Caco-2 (cell line): ENCODE measurements at regions of chr12 and their contacts with region 1.

Region 1: DNA sequence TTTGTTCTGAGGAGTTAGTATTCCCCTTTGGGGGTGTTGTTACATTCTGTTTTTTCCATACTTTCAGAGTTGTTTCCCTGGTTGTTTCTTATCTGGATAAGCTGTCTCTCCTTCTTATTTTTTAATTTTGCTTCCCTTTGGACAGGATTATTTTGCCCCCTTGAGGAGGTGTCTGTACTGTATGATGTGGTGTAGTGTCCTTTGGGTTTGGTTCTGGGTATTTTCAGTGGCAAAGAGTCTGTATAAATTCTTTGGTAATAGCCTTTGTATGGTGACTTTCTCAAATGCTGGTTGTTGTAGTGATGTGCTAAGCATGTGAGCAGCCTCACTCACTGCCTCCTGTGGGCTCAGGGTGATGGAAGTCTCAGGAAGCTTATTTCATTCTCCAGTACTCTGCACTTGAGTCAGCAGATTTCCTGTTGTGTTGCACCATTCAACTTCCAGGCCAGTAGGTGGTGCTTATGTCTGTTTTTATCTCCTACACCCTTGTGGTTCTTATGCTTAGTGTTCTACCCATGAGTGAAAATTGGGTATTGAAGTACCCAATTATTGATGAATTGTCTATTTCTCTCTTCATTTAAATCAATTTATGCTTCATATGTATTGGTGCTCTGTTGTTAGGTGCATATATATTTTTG is 103.3 kb upstream of the PMCH start:
- DNase-seq: peak; percentile 37 to 41
- H3K4me3 ChIP-seq: no peak overlapping the region
- H3K4me3 Mint-ChIP-seq: no peak overlapping the region
- H3K27ac Mint-ChIP-seq: no peak overlapping the region
- H3K4me1 ChIP-seq: no peaks in the 10 kb centered on the region
- H3K4me1 Mint-ChIP-seq: no peaks in the 10 kb centered on the region
- H3K27me3 ChIP-seq: no peaks in the 10 kb centered on the region
- H3K27me3 Mint-ChIP-seq: peaks cover 3% of the 10 kb centered on the region
- CTCF ChIP-seq: peak; percentile 22 to 48

Region 2: DNA sequence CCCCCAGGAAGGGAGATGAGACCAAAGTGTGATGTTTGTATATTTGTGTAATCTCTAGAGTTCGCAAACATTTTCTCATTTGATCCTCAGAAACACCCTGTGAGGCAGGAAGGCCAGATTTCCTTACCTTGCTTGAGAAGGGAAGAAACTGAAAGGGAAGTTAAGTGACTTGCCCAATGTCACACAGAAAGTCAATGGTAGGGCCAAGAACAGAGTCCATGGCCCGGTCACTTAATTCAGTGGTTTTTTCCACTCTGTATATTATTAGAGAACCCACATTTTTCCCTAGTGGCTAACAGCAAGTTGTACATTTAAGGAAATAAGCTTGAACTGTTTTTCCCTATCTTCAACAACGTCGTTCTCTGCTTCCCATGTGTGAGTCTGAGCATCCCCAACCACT is 629.1 kb before region 1 on chr12:
- CTCF ChIA-PET with region 1: no interaction called
- POLR2A ChIA-PET with region 1: no interaction called
- intact Hi-C with region 1: no loop called
- DNase-seq: no peak
- H3K4me3 ChIP-seq: no peak overlapping the region
- H3K4me3 Mint-ChIP-seq: no peak overlapping the region
- H3K27ac Mint-ChIP-seq: no peak overlapping the region
- H3K4me1 ChIP-seq: peaks cover 7% of the 10 kb centered on the region; the same call in 1 of the 2 replicates
- H3K4me1 Mint-ChIP-seq: peaks cover 15% of the 10 kb centered on the region
- H3K27me3 ChIP-seq: no peaks in the 10 kb centered on the region
- H3K27me3 Mint-ChIP-seq: no peaks in the 10 kb centered on the region
- CTCF ChIP-seq: no peak

Region 3: GRCh38 chr12:102119674-102120563 is 181.0 kb before region 1 on chr12 and contains the starts of genes NUP37 and PARPBP:
- CTCF ChIA-PET with region 1: no interaction called
- POLR2A ChIA-PET with region 1: interaction called, 5 read pairs
- intact Hi-C with region 1: loop called (anchors 10 kb)
- DNase-seq: peak; percentile 94 to 95
- H3K4me3 ChIP-seq: peak within 1 kb of the TSS; percentile 55
- H3K4me3 Mint-ChIP-seq: peak within 1 kb of the TSS; percentile 90
- H3K27ac Mint-ChIP-seq: peak within 1 kb of the TSS; percentile 49
- H3K4me1 ChIP-seq: peaks cover 3% of the 10 kb centered on the region; the same call in 1 of the 2 replicates
- H3K4me1 Mint-ChIP-seq: no peaks in the 10 kb centered on the region
- H3K27me3 ChIP-seq: no peaks in the 10 kb centered on the region
- H3K27me3 Mint-ChIP-seq: no peaks in the 10 kb centered on the region
- CTCF ChIP-seq: no peak
- total RNA-seq, gene NUP37: 78.9 and 87.4 TPM in 2 replicates
- total RNA-seq, gene PARPBP: 28.2 and 30.4 TPM in 2 replicates

Region 4: DNA sequence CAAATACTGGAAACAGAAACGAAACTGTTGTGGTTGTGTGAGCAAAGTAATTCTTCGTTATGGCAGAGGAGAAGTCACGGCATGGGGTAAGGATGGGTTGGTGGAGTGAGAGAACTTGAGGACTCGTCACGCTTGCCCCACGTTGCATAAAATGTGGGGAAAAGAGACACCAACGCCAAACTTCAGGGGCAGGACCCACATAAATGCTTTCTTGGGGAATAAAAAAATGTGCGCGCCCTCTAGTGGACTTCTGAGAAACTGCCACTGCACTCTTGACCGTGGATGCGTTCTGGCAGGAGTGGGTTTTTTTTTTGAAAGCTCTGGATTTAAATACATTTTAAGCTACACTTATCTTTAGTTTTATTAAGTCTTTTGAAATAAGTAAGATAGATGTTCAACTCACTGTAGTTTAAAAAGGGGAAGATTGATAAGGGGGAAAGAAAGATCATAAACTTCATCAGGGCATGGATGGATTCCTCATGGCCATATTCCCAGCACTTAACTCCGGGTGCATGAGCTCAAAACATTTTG is 183.6 kb after region 1 on chr12:
- CTCF ChIA-PET with region 1: interaction called, 5 read pairs
- POLR2A ChIA-PET with region 1: no interaction called
- intact Hi-C with region 1: loop called (anchors 1 kb)
- DNase-seq: peak; percentile 34 to 42
- H3K4me3 ChIP-seq: no peak overlapping the region
- H3K4me3 Mint-ChIP-seq: no peak overlapping the region
- H3K27ac Mint-ChIP-seq: peak overlapping the region; percentile 33
- H3K4me1 ChIP-seq: no peaks in the 10 kb centered on the region
- H3K4me1 Mint-ChIP-seq: no peaks in the 10 kb centered on the region
- H3K27me3 ChIP-seq: no peaks in the 10 kb centered on the region
- H3K27me3 Mint-ChIP-seq: no peaks in the 10 kb centered on the region
- CTCF ChIP-seq: peak; percentile 84 to 85

Region 5: DNA sequence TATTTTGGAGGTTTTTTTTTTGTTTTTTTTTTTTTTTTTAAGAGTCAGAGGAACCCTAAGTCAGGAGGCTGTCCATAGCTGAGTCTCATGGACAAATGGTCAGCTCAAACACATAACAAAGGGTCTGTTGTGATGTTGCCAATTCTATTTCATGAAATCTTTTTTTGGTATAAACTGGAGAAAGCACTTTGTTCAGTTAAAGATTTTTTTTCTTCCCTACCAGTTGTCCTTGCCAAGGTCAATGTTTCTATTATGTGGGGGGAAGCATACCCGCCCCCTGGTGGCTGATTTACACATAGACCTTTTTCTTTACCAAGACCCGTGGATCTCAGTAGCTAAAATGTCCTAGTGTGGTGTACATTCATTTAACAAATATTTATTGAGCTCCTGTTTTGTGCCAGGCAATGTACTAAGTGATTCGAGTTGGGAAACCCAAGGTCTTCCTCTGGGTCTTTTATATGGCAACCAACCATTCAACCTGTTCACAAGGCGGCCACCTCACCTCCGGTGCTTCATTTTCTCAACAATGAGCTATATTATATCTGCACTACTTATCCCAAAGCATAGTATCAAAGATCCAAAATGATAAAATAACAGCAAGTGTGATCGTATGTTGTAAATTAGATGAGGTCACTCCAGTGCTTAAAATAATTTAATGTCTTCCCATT is 401.6 kb after region 1 on chr12:
- CTCF ChIA-PET with region 1: interaction called, 5 read pairs
- POLR2A ChIA-PET with region 1: no interaction called
- intact Hi-C with region 1: loop called (anchors 1 kb)
- DNase-seq: peak; percentile 51 to 60
- H3K4me3 ChIP-seq: no peak overlapping the region
- H3K4me3 Mint-ChIP-seq: no peak overlapping the region
- H3K27ac Mint-ChIP-seq: no peak overlapping the region
- H3K4me1 ChIP-seq: no peaks in the 10 kb centered on the region
- H3K4me1 Mint-ChIP-seq: no peaks in the 10 kb centered on the region
- H3K27me3 ChIP-seq: no peaks in the 10 kb centered on the region
- H3K27me3 Mint-ChIP-seq: peaks cover 15% of the 10 kb centered on the region
- CTCF ChIP-seq: peak; percentile 66 to 72

Region 6: DNA sequence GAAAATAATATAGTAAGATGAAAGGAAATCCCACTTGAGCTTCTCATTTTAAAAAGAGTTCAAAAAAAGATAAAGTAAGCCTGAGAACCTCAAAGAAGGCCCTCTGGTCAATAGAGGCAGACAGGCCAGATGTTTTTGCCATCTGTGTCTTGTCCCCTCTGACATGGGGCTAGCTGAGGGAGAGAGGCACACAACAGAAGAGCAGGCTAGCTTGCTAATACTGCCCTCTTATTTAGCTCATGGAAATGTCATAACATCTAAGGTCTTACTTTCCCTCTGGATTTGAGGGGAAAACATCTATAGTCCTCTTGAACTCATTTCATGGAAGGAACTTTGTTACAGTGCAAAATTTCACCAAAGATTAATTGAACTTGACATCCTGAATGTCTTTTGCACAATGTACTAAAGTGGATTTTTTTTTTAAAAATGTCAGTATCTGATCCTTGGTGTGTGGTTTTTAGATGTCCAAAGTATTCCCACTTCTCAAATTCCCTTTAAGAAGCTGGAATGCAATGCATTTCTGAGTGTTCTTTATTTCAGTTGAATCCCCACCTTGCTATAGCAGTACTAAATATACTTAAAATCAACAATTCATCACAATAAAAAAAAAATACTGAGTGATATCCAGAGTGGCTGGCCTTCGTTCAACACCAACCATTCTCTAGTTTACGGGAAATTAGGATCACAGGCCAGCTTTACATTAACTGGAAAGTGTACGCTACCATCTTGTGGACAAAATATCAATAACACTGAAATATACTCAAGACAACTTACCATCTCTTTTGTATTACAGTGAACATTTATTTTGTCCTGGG is 439.4 kb after region 1 on chr12:
- CTCF ChIA-PET with region 1: interaction called, 3 read pairs
- POLR2A ChIA-PET with region 1: no interaction called
- intact Hi-C with region 1: loop called (anchors 2 kb)
- DNase-seq: peak in 1 of 2 experiments; percentile 4
- H3K4me3 ChIP-seq: no peak overlapping the region
- H3K4me3 Mint-ChIP-seq: no peak overlapping the region
- H3K27ac Mint-ChIP-seq: no peak overlapping the region
- H3K4me1 ChIP-seq: no peaks in the 10 kb centered on the region
- H3K4me1 Mint-ChIP-seq: no peaks in the 10 kb centered on the region
- H3K27me3 ChIP-seq: no peaks in the 10 kb centered on the region
- H3K27me3 Mint-ChIP-seq: no peaks in the 10 kb centered on the region
- CTCF ChIP-seq: peak in 1 of 2 experiments; percentile 36